Transverse colon (tissue), 4 donors: ENCODE measurements at regions of chr22 and their contacts with region 1.

Region 1: GRCh38 chr22:20957316-20958101 is 9.5 kb upstream of the AIFM3 start:
- DNase-seq: peak; percentile 82
- H3K4me3 ChIP-seq: peak overlapping the region; percentile 54 to 75 (median 64)
- H3K27ac ChIP-seq: peak overlapping the region; percentile 86 to 93 (median 89)
- H3K4me1 ChIP-seq: peaks cover 9 to 55% (median 39%) of the 10 kb centered on the region in 4 donors
- H3K27me3 ChIP-seq: no peaks in the 10 kb centered on the region
- CTCF ChIP-seq: peak in 1 of 5 experiments; percentile 20
- EP300 ChIP-seq: no peak
- POLR2A ChIP-seq: peak; percentile 75

Region 2: DNA sequence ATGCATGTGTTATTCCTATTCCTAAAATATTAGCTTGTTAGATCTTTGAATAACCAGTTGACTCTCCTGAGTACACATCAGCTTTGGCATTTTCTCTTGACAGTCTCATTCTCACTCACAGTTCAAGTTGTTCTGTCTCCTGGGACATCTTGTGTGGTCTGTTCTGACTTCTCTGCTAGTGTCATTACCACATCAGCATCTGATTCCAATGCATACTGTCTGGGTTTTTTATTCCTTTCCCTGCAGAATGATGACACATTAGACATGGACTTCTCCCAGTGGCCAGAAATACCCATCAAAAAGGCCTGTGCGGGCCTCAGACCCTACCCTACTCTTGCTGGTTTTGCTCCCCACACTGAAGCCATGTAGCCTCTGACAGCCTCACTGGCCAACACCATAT is 560.9 kb before region 1 on chr22:
- in situ Hi-C with region 1: no loop called
- intact Hi-C with region 1: no loop called
- DNase-seq: no peak
- H3K4me3 ChIP-seq: no peak overlapping the region
- H3K27ac ChIP-seq: no peak overlapping the region
- H3K4me1 ChIP-seq: peaks cover 2 to 19% (median 14%) of the 10 kb centered on the region in 4 donors
- H3K27me3 ChIP-seq: no peaks in the 10 kb centered on the region
- CTCF ChIP-seq: no peak
- EP300 ChIP-seq: no peak
- POLR2A ChIP-seq: no peak

Region 3: DNA sequence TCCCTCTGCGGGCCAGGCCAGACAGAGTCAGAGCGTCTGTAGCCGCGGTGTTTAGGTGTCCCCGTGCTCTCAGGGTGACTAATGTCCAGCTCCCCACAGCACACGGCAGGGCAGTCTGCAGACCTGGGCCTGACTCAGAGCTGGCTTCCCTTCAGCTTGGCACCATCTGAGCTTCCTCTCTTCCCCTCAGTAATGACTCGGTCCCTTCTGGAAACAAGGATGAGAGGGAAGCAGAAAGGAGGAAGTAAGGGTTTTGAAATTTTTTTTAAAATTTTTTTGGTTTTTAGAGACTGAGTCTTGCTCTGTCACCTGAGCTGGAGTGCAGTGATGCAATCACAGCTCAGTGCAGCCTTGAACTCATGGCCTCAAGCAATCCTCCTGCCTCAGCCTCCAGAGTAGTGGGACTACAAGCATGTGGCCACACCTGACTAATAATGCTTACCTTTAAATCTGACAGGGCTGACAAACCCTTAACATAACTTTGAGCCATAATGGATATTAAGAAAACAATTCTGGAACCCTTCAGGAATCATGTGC is 116.7 kb after region 1 on chr22:
- in situ Hi-C with region 1: loop called in 1 of 4 experiments (anchors 25 kb)
- intact Hi-C with region 1: no loop called
- DNase-seq: no peak
- H3K4me3 ChIP-seq: no peak overlapping the region
- H3K27ac ChIP-seq: no peak overlapping the region
- H3K4me1 ChIP-seq: no peaks in the 10 kb centered on the region
- H3K27me3 ChIP-seq: no peaks in the 10 kb centered on the region
- CTCF ChIP-seq: no peak
- EP300 ChIP-seq: no peak
- POLR2A ChIP-seq: no peak

Region 4: GRCh38 chr22:21735200-21736076 is 777.9 kb after region 1 on chr22 and contains the start of gene YPEL1:
- in situ Hi-C with region 1: no loop called
- intact Hi-C with region 1: no loop called
- DNase-seq: peak; percentile 97
- H3K4me3 ChIP-seq: peak within 1 kb of the TSS; percentile 28 to 60 (median 52)
- H3K27ac ChIP-seq: peak within 1 kb of the TSS; percentile 82 to 88 (median 85)
- H3K4me1 ChIP-seq: peaks cover 4 to 17% (median 12%) of the 10 kb centered on the region in 4 donors
- H3K27me3 ChIP-seq: no peaks in the 10 kb centered on the region
- CTCF ChIP-seq: no peak
- EP300 ChIP-seq: no peak
- POLR2A ChIP-seq: peak; percentile 61
- total RNA-seq, gene YPEL1: 2.9 to 9.0 (median 4.6) TPM in 3 of 4 donors, not detected in the other